ENCODE measurements at regions of chr6 and their contacts with region 1.

Region 1: DNA sequence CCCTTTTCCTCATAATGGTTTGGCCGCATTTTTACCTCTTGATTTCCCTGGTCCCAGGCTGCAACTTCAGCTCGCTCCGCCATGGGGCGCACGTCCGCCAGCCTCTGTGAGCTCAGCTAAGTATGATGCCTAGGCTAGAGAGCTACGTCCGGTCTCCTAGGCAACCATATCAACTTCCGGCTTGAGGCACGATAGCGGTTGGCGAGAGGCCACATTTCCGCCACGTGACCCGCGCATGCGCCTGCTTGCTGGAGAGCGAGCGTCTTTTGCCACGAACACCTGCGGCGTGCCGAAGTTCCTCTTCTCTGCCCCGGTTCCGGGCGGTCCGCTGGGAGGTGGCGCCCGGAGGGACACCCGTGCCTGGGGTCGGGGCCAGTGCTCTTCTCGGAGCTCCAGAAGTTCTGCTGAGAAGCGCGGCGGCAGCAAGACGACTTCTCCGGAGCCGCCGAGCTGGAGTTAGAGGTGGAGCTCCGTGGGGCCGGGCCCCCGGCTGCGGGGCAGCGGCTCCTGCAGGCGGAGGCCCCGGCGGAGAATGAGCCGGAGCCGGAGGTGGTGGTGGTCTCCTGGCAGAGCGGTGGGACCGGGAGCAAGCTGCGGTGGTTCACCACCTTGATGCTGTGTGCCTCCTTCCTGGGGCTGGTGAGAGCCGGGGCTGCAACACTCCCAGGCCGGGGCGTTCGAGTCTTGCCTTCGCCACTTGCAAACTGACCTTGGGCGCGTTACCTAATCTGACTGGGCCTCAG is 172.0 kb downstream of the SLC16A10 start:
- DNase-seq: peak; percentile 98 to 99
- H3K4me3 ChIP-seq: peak overlapping the region; percentile 60
- H3K4me3 Mint-ChIP-seq: peak overlapping the region; percentile 77
- H3K27ac Mint-ChIP-seq: peak overlapping the region; percentile 76
- H3K4me1 ChIP-seq: peaks cover 13% of the 10 kb centered on the region
- H3K4me1 Mint-ChIP-seq: peaks cover 14% of the 10 kb centered on the region
- H3K27me3 ChIP-seq: no peaks in the 10 kb centered on the region
- H3K27me3 Mint-ChIP-seq: no peaks in the 10 kb centered on the region
- CTCF ChIP-seq: peak; percentile 82 to 92

Region 2: DNA sequence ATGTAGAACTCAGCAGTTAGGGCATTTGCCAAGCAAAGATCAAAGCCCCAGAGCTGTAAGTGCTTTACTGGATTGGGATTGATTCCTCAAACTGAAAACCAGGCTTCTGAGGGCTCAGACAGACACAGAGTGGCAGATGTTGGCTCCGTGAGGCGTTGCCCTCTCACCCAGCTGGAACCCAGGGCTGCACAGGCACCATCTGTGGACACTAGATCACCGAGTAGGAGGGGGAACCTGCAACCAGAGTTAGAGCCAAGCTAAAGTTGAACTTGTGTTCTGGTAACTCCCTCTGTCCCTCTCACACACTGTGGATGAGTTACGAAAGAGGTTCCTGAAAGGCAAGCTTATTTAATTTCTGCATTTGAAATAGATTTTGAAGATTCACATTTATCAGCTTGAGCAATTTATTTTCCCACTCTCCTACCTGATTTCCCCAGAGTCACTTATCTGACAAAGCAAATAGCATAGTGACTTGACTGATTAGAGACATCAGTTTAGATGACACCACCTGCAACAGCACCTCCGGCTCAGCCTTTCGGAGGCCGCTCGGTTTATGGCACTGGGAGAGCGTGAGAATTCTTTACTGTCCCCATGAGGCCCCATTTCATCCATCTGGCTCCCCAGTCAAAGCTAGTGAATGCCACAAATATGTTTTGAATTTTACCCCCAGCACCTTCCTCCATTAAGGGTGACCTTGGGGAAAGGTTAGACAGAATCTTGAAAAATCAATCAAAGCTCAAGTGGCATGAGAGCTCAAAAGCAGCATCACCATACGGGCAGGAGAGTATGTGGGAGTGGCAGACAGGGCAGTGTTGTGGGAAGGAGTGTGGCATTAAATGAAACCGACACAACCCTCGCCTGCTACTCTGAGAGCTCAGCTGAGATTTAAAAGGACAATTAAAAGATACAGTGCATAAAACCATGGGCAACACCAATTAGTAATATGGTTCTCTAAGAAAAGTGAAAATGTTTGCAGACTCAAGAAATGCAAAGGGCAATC is 229.0 kb before region 1 on chr6:
- CTCF ChIA-PET with region 1: interaction called, 3 read pairs
- POLR2A ChIA-PET with region 1: no interaction called
- intact Hi-C with region 1: loop called (anchors 5 kb)
- DNase-seq: peak in 1 of 2 experiments; percentile 42
- H3K4me3 ChIP-seq: no peak overlapping the region
- H3K4me3 Mint-ChIP-seq: no peak overlapping the region
- H3K27ac Mint-ChIP-seq: no peak overlapping the region
- H3K4me1 ChIP-seq: no peaks in the 10 kb centered on the region; the same call in 1 of the 2 replicates
- H3K4me1 Mint-ChIP-seq: peaks cover 13% of the 10 kb centered on the region
- H3K27me3 ChIP-seq: no peaks in the 10 kb centered on the region
- H3K27me3 Mint-ChIP-seq: no peaks in the 10 kb centered on the region
- CTCF ChIP-seq: no peak

Region 3: DNA sequence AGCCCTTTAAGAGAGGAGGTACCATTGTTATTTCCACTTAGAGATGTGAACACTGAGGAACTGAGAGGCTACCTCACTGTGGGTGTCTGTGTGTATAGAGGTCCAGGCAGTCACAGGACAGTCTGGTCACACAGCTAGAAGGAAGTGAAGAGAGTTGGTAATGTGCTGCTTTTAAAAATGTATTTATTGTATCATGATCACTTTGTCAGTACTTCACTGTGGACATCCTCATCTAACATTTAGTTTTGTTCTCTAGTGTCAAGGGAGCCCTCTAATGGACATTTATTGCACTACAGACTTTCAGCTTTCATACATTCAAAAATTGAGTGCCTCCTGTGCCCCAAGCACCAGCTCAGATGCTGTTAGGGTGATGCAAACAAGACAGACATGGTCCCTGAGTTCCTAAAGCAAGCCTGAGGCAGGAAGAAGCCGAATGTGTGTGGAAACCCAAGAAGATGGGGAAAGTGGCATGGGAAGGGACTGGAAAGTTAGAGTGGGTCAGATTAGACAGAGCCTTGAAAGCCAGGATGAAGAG is 49.0 kb before region 1 on chr6:
- CTCF ChIA-PET with region 1: interaction called, 4 read pairs
- POLR2A ChIA-PET with region 1: no interaction called
- intact Hi-C with region 1: loop called (anchors 2 kb)
- DNase-seq: peak in 1 of 2 experiments; percentile 65
- H3K4me3 ChIP-seq: no peak overlapping the region
- H3K4me3 Mint-ChIP-seq: no peak overlapping the region
- H3K27ac Mint-ChIP-seq: no peak overlapping the region
- H3K4me1 ChIP-seq: no peaks in the 10 kb centered on the region
- H3K4me1 Mint-ChIP-seq: no peaks in the 10 kb centered on the region
- H3K27me3 ChIP-seq: no peaks in the 10 kb centered on the region
- H3K27me3 Mint-ChIP-seq: no peaks in the 10 kb centered on the region
- CTCF ChIP-seq: peak; percentile 60 to 77

Region 4: DNA sequence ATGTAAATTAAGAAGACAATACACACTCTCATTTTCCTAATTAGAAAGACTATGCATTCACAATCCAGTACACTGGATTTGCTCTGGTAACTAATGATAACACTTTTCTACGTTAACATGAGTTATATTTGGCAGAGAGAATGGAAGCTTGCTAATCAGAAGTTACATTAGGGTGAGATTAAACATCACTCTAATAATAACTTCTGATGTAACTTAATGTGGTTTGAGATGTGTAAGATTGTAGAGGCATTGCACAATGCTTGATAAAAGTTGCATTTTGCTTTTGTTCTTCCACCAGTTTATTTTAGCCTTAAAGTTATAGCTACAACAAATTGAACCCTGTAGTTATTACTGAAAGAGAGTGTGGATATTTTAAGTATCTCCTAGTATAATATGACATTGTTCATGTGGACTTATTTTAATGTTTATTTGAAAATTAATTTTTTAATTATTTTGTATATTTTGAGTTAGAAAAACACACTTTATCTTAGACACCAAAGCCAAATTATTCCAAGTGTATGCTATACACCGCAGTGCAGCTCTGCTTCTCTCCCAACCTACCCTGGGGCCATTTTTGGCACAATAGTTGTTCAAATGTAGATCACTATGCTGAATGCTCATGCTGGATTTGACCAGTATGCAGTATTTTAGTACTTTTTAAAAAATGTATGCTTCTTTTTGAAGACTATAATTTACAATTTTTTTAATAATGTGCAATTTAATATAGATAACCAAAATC is 28.7 kb before region 1 on chr6:
- CTCF ChIA-PET with region 1: no interaction called
- POLR2A ChIA-PET with region 1: no interaction called
- intact Hi-C with region 1: no loop called
- DNase-seq: no peak
- H3K4me3 ChIP-seq: no peak overlapping the region
- H3K4me3 Mint-ChIP-seq: no peak overlapping the region
- H3K27ac Mint-ChIP-seq: no peak overlapping the region
- H3K4me1 ChIP-seq: no peaks in the 10 kb centered on the region
- H3K4me1 Mint-ChIP-seq: peaks cover 15% of the 10 kb centered on the region
- H3K27me3 ChIP-seq: no peaks in the 10 kb centered on the region
- H3K27me3 Mint-ChIP-seq: no peaks in the 10 kb centered on the region
- CTCF ChIP-seq: no peak

Region 5: DNA sequence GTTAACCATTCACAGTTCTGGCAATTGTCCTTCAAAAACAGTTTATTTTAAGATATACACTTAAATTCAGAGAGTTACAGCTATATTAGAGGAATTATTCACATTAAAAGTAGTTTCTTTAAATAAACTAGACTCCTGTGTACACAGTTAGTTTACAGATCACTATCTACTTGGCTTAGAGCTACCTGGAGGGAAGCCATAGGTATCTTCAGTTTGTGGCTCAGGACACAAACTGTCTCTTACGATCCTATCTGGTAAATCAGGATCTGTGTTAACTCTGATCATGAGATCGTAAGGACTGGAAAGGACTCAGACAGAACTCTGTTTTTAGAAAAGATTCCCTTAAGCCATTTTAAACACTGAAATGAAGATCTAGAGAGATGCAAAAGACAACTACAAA is 62.9 kb after region 1 on chr6:
- CTCF ChIA-PET with region 1: interaction called, 6 read pairs
- POLR2A ChIA-PET with region 1: no interaction called
- intact Hi-C with region 1: loop called (anchors 5 kb)
- DNase-seq: no peak
- H3K4me3 ChIP-seq: no peak overlapping the region
- H3K4me3 Mint-ChIP-seq: no peak overlapping the region
- H3K27ac Mint-ChIP-seq: no peak overlapping the region
- H3K4me1 ChIP-seq: no peaks in the 10 kb centered on the region
- H3K4me1 Mint-ChIP-seq: no peaks in the 10 kb centered on the region
- H3K27me3 ChIP-seq: no peaks in the 10 kb centered on the region
- H3K27me3 Mint-ChIP-seq: no peaks in the 10 kb centered on the region
- CTCF ChIP-seq: no peak

Region 6: DNA sequence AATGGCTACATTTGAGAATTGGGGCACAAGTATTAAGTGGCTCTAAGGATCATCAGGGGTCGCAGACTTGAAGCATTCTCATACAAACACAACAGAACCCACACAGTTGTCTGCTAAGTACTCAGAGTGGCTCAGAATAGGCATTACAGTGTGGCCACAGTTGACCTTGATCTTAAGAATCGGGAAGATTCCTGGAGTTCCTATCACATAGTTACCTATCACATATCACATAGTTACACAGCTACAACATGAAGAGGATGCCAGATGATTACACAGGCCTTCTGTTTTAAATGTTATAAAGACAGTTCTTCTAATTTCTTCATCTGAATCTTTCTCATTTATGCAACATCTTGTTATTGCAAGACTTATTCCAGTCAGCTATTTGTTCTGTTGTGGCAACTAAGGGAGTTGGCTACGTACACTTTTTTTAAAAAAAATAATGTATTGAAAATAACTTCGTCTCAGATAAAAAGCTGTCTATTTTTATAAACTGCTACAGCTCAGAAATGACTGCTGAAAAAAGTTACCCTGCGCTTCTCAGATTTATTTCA is 94.7 kb after region 1 on chr6:
- CTCF ChIA-PET with region 1: no interaction called
- POLR2A ChIA-PET with region 1: no interaction called
- intact Hi-C with region 1: no loop called
- DNase-seq: no peak
- H3K4me3 ChIP-seq: no peak overlapping the region
- H3K4me3 Mint-ChIP-seq: no peak overlapping the region
- H3K27ac Mint-ChIP-seq: no peak overlapping the region
- H3K4me1 ChIP-seq: no peaks in the 10 kb centered on the region
- H3K4me1 Mint-ChIP-seq: no peaks in the 10 kb centered on the region
- H3K27me3 ChIP-seq: no peaks in the 10 kb centered on the region
- H3K27me3 Mint-ChIP-seq: no peaks in the 10 kb centered on the region
- CTCF ChIP-seq: no peak

Region 7: GRCh38 chr6:111478749-111479148 is 219.5 kb after region 1 on chr6:
- CTCF ChIA-PET with region 1: interaction called, 14 read pairs
- POLR2A ChIA-PET with region 1: interaction called, 17 read pairs
- intact Hi-C with region 1: loop called (anchors 2 kb)
- DNase-seq: no peak
- H3K4me3 ChIP-seq: no peak overlapping the region
- H3K4me3 Mint-ChIP-seq: no peak overlapping the region
- H3K27ac Mint-ChIP-seq: no peak overlapping the region
- H3K4me1 ChIP-seq: peaks cover 17% of the 10 kb centered on the region
- H3K4me1 Mint-ChIP-seq: peaks cover 21% of the 10 kb centered on the region
- H3K27me3 ChIP-seq: no peaks in the 10 kb centered on the region
- H3K27me3 Mint-ChIP-seq: no peaks in the 10 kb centered on the region
- CTCF ChIP-seq: peak in 1 of 2 experiments; percentile 24

Region 8: DNA sequence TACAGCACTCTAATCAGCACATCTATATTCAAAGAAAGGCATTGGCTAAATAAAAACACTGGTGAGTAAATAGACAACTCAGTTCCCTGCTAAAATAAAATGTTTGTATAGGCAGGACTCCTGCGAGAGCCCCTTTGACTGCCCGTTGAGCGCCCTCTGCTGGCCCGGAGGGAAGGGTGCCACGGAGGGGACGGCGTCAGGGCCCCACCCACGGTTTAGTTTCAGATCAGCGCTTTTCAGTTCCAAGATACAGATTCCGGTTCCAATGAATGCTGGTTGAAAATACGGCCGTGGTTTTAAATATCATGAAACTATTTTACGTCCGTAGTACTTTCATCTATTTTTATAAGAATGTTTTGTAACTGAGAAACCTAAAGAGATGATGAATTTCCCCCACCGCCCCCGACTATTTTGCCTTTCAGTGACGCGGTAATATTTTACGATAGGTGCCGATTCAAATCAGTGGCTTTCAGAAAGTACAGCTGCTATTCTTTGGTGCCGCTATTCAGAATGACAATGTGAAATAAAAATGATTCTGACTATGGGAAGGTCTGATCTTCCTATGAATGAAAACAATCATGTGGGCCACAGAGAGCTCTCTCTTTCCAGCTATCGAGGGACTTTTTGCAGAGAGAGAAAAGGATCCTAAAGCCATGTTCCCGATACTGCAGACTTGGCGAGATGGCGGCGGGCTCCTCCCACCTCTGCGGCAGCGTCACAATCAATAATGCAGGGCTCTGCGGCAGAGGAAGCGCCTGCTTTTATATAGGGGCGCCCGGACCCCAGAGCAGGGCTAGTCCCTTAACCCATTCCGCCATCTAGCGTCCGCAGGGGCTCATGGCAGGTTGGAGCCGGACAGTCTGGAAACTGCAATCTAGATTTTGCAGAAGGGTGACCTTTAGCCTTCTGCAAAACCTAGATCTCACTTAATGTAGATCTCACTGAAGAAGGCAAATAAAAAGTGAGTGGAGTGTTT is 784.1 kb after region 1 on chr6:
- CTCF ChIA-PET with region 1: interaction called, 4 read pairs
- POLR2A ChIA-PET with region 1: no interaction called
- intact Hi-C with region 1: loop called (anchors 1 kb)
- DNase-seq: peak; percentile 89
- H3K4me3 ChIP-seq: peak overlapping the region; percentile 59
- H3K4me3 Mint-ChIP-seq: peak overlapping the region; percentile 83
- H3K27ac Mint-ChIP-seq: peak overlapping the region; percentile 73
- H3K4me1 ChIP-seq: peaks cover 3% of the 10 kb centered on the region; the same call in 1 of the 2 replicates
- H3K4me1 Mint-ChIP-seq: no peaks in the 10 kb centered on the region
- H3K27me3 ChIP-seq: no peaks in the 10 kb centered on the region
- H3K27me3 Mint-ChIP-seq: peaks cover 3% of the 10 kb centered on the region
- CTCF ChIP-seq: peak; percentile 89 to 96

Measured in Caco-2 (cell line).